ENCODE measurements at regions of chr10 and their contacts with region 1.

Region 1: GRCh38 chr10:48656241-48656913 is 28.3 kb upstream of the WDFY4 start:
- DNase-seq: peak; percentile 88
- H3K4me3 Mint-ChIP-seq: peak overlapping the region; percentile 73
- H3K27ac Mint-ChIP-seq: no peak overlapping the region
- H3K4me1 Mint-ChIP-seq: peaks cover 13% of the 10 kb centered on the region
- H3K27me3 Mint-ChIP-seq: peaks cover 58% of the 10 kb centered on the region
- CTCF ChIP-seq: peak; percentile 98

Region 2: DNA sequence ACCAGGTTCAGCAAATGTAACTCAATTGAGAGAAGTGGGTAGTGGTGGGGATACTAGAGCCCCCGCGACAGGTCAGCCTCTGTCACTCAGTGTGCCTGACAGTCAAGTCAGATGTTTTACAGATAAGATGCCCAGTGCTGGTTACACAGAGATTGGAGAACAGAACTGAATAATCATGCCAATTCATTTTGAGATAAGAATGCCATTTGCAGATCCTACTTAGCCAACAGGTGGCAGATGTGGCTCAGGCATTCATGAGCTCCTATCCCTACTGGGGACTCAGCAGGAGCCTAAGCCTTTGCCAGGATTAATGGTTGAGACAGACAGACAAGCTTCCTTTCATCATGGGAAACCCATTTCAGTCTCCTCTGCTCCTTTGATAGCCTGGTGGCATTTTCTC is 212.1 kb before region 1 on chr10:
- CTCF ChIA-PET with region 1: interaction called, 17 read pairs
- POLR2A ChIA-PET with region 1: no interaction called
- intact Hi-C with region 1: loop called (anchors 1 kb)
- DNase-seq: peak; percentile 56
- H3K4me3 Mint-ChIP-seq: no peak overlapping the region
- H3K27ac Mint-ChIP-seq: no peak overlapping the region
- H3K4me1 Mint-ChIP-seq: peaks cover 6% of the 10 kb centered on the region
- H3K27me3 Mint-ChIP-seq: no peaks in the 10 kb centered on the region
- CTCF ChIP-seq: peak; percentile 28

Region 3: DNA sequence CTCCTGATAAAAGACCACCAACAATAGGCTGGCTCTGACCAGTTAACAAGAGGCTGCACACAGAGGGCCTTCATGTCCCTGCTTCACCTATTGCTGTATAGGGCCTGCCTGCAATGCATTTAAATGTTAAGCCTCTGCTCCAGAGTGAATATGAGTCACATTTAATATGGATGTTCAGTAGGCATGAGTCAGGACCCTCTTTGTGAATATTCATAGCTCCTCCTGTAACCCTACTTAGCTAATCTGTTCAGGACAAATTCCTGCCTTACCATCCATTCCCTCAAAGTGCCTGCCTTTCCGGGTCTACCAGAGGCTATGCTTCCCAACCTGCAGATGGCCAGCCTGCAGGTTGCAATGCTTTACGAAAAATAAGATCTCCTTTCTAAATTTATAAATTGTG is 84.0 kb before region 1 on chr10:
- CTCF ChIA-PET with region 1: interaction called, 17 read pairs
- POLR2A ChIA-PET with region 1: no interaction called
- intact Hi-C with region 1: no loop called
- DNase-seq: no peak
- H3K4me3 Mint-ChIP-seq: no peak overlapping the region
- H3K27ac Mint-ChIP-seq: no peak overlapping the region
- H3K4me1 Mint-ChIP-seq: no peaks in the 10 kb centered on the region
- H3K27me3 Mint-ChIP-seq: no peaks in the 10 kb centered on the region
- CTCF ChIP-seq: no peak

Region 4: DNA sequence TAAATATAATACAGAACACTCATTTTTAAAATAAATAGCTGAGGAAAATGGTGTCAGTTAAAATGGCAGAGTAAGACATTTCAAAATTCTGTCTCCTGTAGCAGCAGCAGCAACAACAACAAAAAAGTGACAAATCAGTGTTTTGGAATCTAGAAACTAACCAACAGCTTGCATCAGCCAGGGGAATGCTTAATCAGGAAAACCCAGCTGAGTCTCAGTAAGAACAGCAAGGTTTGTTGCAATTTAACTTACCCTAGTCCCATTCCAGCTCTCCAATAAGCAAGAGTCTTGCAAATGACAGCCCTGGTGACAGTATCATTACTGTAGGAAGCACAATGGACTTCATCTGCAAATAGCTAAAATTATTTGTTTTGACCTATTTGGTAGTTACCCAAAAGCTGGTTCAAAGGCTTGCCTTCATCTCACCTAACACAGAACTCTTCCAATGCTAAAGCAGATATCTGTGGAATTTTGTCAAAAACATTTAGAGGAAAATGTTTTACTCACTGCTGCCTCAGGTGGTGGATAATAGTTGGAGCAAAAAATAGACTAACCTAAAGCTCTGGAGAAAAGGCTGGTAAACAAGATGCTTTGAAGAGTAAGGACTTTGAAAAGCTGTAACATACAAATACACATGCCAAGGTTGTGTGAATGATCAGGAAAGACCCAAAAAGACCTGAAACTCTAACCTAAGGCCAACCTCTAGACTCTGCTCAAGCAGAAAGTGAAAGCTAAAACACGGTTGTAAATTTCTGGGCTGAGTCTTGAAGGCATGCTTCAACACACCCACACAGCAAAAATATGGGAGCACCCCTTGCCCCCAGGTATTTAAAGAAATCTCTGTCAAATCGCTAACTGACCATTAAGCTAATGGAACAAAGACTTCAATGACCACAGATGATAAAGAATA is 41.6 kb before region 1 on chr10:
- CTCF ChIA-PET with region 1: interaction called, 87 read pairs
- POLR2A ChIA-PET with region 1: interaction called, 3 read pairs
- intact Hi-C with region 1: no loop called
- DNase-seq: no peak
- H3K4me3 Mint-ChIP-seq: no peak overlapping the region
- H3K27ac Mint-ChIP-seq: no peak overlapping the region
- H3K4me1 Mint-ChIP-seq: no peaks in the 10 kb centered on the region
- H3K27me3 Mint-ChIP-seq: peaks cover 46% of the 10 kb centered on the region
- CTCF ChIP-seq: peak; percentile 30

Region 5: DNA sequence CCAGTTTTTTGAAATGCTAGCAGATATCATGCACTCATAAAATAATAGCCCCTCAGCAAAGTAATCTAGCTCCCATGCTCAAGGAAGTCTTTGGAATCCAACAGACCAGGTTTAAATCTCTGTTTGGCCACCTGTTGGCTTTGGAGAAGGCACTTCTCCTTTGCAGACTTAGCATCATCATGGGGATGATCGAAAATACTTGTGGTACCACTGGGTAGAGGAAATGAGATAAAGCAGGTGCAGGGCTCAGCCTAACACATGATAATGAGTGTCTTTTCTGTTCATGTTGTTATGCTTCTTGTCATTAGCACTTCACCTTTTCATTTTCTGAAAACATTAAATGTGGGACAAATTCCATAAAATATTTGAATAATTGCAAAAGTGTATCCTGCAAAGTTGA is 215.9 kb after region 1 on chr10:
- CTCF ChIA-PET with region 1: interaction called, 12 read pairs
- POLR2A ChIA-PET with region 1: no interaction called
- intact Hi-C with region 1: no loop called
- DNase-seq: no peak
- H3K4me3 Mint-ChIP-seq: no peak overlapping the region
- H3K27ac Mint-ChIP-seq: no peak overlapping the region
- H3K4me1 Mint-ChIP-seq: no peaks in the 10 kb centered on the region
- H3K27me3 Mint-ChIP-seq: no peaks in the 10 kb centered on the region
- CTCF ChIP-seq: no peak

Region 6: GRCh38 chr10:49512121-49512809 is 855.9 kb after region 1 on chr10:
- CTCF ChIA-PET with region 1: interaction called, 10 read pairs
- POLR2A ChIA-PET with region 1: no interaction called
- intact Hi-C with region 1: no loop called
- DNase-seq: peak; percentile 43
- H3K4me3 Mint-ChIP-seq: no peak overlapping the region
- H3K27ac Mint-ChIP-seq: peak overlapping the region; percentile 49
- H3K4me1 Mint-ChIP-seq: peaks cover 6% of the 10 kb centered on the region
- H3K27me3 Mint-ChIP-seq: no peaks in the 10 kb centered on the region
- CTCF ChIP-seq: peak; percentile 60

Measured in MCF 10A (cell line).